ENCODE measurements at regions of chr12 and their contacts with region 1.

Region 1: GRCh38 chr12:133181238-133181959 is at the start of gene ZNF268:
- DNase-seq: peak; percentile 87
- H3K4me3 Mint-ChIP-seq: peak within 1 kb of the TSS; percentile 97
- H3K27ac Mint-ChIP-seq: peak within 1 kb of the TSS; percentile 95
- H3K4me1 Mint-ChIP-seq: peaks cover 20% of the 10 kb centered on the region
- H3K27me3 Mint-ChIP-seq: no peaks in the 10 kb centered on the region
- total RNA-seq, gene ZNF268: 16.7 and 21.5 TPM in 2 replicates

Region 2: DNA sequence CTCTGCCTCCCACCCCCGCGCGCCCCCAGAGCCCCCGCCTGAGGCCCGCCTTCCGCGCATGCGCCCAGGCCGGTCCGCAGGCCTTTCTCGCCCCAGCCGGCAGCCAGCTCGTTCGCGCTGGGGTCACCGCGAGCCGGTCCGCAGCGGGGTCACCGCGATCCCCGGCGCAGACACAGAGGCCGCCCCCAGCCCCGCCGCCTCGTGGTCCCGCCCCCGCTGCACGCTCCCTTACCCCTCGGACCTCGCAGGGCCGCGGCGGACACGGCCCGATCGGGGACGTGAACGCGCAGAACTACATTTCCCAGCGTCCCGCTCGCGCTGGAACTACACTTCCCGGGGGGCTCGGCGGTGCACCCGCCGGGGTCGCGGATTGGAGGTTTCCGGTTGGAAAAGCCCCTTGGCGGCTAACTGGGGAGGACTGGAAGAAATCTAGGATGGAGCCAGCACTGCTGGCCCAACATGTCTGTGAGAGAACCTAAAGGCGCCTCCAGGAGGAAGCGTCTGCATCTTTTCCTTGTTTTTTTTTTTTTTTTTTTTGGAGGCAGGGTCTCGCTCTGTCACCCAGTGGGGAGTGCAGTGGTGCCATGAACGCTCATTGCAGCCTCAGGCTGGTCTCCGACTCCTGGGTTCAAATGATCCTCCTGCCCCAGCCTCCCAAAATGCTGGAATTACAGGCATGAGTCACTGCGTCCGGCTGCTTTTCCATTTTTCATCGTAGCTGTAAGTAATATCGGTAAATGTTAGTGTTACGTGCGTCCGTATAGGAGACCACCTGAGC is 225.2 kb before region 1 on chr12 and contains the start of gene ZNF605:
- intact Hi-C with region 1: loop called (anchors 1 kb)
- DNase-seq: peak; percentile 85
- H3K4me3 Mint-ChIP-seq: peak within 1 kb of the TSS; percentile 98
- H3K27ac Mint-ChIP-seq: peak within 1 kb of the TSS; percentile 94
- H3K4me1 Mint-ChIP-seq: peaks cover 18% of the 10 kb centered on the region
- H3K27me3 Mint-ChIP-seq: no peaks in the 10 kb centered on the region
- total RNA-seq, gene ZNF605: 6.3 and 7.5 TPM in 2 replicates

Region 3: GRCh38 chr12:132986001-132986912 is 195.1 kb before region 1 on chr12 and contains the start of gene ZNF26:
- intact Hi-C with region 1: loop called (anchors 1 kb)
- DNase-seq: peak; percentile 84
- H3K4me3 Mint-ChIP-seq: peak within 1 kb of the TSS; percentile 90
- H3K27ac Mint-ChIP-seq: peak within 1 kb of the TSS; percentile 92
- H3K4me1 Mint-ChIP-seq: peaks cover 22% of the 10 kb centered on the region
- H3K27me3 Mint-ChIP-seq: no peaks in the 10 kb centered on the region
- total RNA-seq, gene ZNF26: 18.2 and 22.1 TPM in 2 replicates

Region 4: GRCh38 chr12:133080368-133081158 is 100.8 kb before region 1 on chr12 and contains the start of gene ZNF140:
- intact Hi-C with region 1: loop called (anchors 1 kb)
- DNase-seq: peak; percentile 93
- H3K4me3 Mint-ChIP-seq: no peak within 1 kb of the TSS
- H3K27ac Mint-ChIP-seq: peak within 1 kb of the TSS; percentile 84
- H3K4me1 Mint-ChIP-seq: no peaks in the 10 kb centered on the region
- H3K27me3 Mint-ChIP-seq: no peaks in the 10 kb centered on the region
- total RNA-seq, gene ZNF140: 15.0 and 15.1 TPM in 2 replicates

Measured in activated T-helper 1 cell treated with anti-CD3 and anti-CD28 coated beads, Interleukin-12 subunit alpha, Interleukin-12 subunit beta, Interleukin-2, Interleukin-4 antibody, amounts not matched to agents 30 ng/mL and 10 ng/mL and 1 ng/mL, durations not matched to agents 14 hours and 24 hours and 36 hours (primary cell).